WTC11 (cell line): ENCODE measurements at regions of chr14 and their contacts with region 1.

Region 1: GRCh38 chr14:103078093-103078749 is 5.8 kb upstream of the LBHD2 start:
- DNase-seq: peak; percentile 77
- ATAC-seq: peak; percentile 78
- H3K4me3 Mint-ChIP-seq: no peak overlapping the region
- H3K27ac Mint-ChIP-seq: no peak overlapping the region
- H3K4me1 Mint-ChIP-seq: no peaks in the 10 kb centered on the region
- H3K27me3 Mint-ChIP-seq: peaks cover 5% of the 10 kb centered on the region
- CTCF ChIP-seq: peak; percentile 68; the same call in 1 of the 2 replicates

Region 2: GRCh38 chr14:102893452-102893851 is 184.8 kb before region 1 on chr14:
- CTCF ChIA-PET with region 1: no interaction called
- POLR2A ChIA-PET with region 1: no interaction called
- DNase-seq: no peak
- ATAC-seq: no peak
- H3K4me3 Mint-ChIP-seq: no peak overlapping the region
- H3K27ac Mint-ChIP-seq: no peak overlapping the region
- H3K4me1 Mint-ChIP-seq: no peaks in the 10 kb centered on the region
- H3K27me3 Mint-ChIP-seq: no peaks in the 10 kb centered on the region
- CTCF ChIP-seq: no peak

Region 3: GRCh38 chr14:103298620-103299019 is 220.4 kb after region 1 on chr14:
- CTCF ChIA-PET with region 1: interaction called, 10 read pairs
- POLR2A ChIA-PET with region 1: no interaction called
- DNase-seq: no peak
- ATAC-seq: no peak
- H3K4me3 Mint-ChIP-seq: no peak overlapping the region
- H3K27ac Mint-ChIP-seq: no peak overlapping the region
- H3K4me1 Mint-ChIP-seq: no peaks in the 10 kb centered on the region
- H3K27me3 Mint-ChIP-seq: no peaks in the 10 kb centered on the region; the same call in 1 of the 2 replicates
- CTCF ChIP-seq: no peak